CD4-positive, alpha-beta memory T cell (primary cell): ENCODE measurements at regions of chr6 and their contacts with region 1.

Region 1: DNA sequence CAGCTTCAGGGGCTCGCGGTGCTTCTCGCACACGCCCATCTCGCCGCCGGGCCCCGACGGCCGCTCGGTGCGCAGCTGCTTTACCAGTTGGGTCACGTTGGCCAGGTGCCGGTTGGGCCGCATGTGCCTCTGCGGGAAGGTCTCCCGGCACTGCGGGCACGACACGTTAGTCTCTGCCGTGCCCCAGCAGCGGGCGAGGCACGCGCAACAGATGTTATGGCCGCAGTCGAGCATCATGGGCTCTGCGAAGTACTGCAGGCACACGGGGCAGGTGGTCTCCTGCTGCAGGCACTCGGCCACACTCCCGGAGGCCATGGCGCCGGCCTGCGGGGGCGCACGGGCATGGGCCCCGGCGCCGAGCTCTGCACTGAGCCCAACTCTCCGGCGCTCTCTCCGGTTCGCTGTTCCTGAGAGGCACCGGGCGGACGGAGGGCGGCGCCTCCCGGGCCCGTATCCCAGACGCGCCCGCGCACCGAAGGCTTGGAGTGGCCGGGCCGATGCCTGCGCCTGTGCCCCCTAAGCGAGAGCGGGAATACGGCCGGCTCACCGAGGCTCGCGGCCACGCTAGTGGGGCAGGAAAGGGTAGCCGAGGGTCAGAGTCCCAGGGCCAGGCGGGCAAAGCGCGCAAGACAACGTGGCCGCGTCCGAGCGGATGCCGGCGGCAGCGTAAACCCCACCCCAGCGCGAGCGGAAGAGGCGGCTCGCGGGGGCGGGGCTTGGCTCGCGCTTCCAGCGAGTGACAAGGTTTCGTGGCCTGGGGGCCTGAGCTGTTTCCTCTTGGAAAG is at the start of gene TRIM27:
- DNase-seq: peak; percentile 76 to 84 (median 78)
- H3K4me3 ChIP-seq: peak within 1 kb of the TSS; percentile 82 to 91
- H3K4me3 Mint-ChIP-seq: peak within 1 kb of the TSS; percentile 92 to 98 (median 95)
- H3K27ac ChIP-seq: peak within 1 kb of the TSS; percentile 82
- H3K27ac Mint-ChIP-seq: peak within 1 kb of the TSS; percentile 86 to 96 (median 94)
- H3K4me1 ChIP-seq: peaks cover 46% of the 10 kb centered on the region
- H3K4me1 Mint-ChIP-seq: peaks cover 30 to 49% (median 41%) of the 10 kb centered on the region in 4 donors
- H3K27me3 ChIP-seq: no peaks in the 10 kb centered on the region
- H3K27me3 Mint-ChIP-seq: peaks cover 0 to 2% of the 10 kb centered on the region in 2 donors
- total RNA-seq, gene TRIM27: 102 to 108 TPM

Region 2: DNA sequence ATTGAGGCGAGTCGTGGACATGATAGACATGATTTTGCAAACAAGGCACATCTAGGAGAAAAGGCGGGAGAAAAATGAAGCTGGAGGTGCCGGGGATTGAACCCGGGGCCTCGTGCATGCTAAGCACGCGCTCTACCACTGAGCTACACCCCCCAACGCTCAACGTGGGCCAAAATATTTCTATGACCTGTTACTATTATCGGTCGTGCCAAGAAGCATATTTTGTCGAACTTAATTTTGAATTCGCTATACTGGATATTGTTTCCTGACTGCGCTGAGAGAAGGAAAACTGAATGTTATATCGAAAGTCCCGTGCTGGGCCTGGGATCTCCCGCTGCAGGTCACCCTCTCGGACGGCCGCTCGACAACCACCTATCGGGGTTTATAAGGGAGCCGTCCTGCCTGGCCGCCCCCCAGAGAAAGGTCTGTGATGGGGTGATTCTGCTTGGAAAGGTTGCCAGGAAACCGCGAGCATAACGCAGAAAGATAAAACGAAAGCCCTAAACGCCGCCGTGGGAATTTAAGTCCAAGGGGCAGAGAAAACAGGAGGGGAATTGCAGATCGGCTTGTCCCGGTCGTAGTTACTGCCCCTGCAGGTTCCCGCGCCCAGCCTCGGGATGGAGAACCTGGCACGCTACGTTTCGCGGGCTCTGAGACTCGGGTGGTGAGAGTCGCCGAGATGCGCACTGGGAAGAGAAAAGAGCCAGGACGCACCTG is 59.7 kb before region 1 on chr6:
- CTCF ChIA-PET with region 1: interaction called, 7 read pairs
- POLR2A ChIA-PET with region 1: interaction called, 92 read pairs
- intact Hi-C with region 1: loop called (anchors 1 kb)
- DNase-seq: peak; percentile 88 to 91 (median 89)
- H3K4me3 ChIP-seq: peak overlapping the region; percentile 53 to 85
- H3K4me3 Mint-ChIP-seq: peak overlapping the region; percentile 92 to 97 (median 94)
- H3K27ac ChIP-seq: peak overlapping the region; percentile 45
- H3K27ac Mint-ChIP-seq: peak overlapping the region; percentile 79 to 99 (median 97)
- H3K4me1 ChIP-seq: peaks cover 14% of the 10 kb centered on the region
- H3K4me1 Mint-ChIP-seq: peaks cover 21 to 64% (median 43%) of the 10 kb centered on the region in 4 donors
- H3K27me3 ChIP-seq: no peaks in the 10 kb centered on the region
- H3K27me3 Mint-ChIP-seq: peaks cover 4 to 5% of the 10 kb centered on the region in 2 donors

Region 3: DNA sequence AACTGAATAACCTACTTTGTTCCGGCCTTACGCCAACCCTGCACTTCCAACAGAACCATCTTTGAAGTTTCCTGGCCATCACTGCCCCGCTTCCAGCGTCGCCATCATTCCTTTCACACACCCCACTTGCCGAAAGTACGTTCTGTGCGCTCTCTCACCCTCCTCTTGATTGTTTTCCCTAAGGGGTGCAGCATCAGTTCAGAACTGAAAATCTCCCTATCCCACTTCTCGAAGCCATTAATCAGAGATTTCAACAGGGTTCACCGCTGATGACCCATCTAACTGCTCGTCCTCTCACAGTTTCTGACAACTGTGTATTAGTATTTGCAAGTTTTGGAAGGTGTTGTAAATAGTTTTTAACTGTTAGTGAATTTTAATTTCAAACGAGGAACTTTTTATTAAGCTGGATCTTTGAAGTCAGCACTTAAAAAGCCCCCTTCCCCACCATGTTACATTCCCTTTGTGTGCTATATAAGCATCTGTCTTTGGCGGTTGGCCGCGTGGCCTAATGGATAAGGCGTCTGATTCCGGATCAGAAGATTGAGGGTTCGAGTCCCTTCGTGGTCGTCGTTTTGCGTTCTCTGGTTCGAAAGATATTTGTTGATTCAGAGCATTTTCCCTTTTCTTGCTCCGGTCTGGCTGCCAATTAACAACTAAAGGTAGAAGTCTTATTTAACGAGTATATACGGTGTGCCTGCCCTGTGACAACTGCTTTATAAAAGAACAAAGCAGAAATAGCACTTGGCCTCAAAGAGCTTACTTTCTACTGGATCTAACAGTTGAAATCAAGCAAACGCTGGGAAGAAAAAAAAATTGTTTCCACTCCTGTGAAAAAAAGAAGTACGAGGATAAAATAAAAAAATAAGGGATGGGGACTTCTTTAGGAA is 42.4 kb before region 1 on chr6:
- CTCF ChIA-PET with region 1: no interaction called
- POLR2A ChIA-PET with region 1: interaction called, 70 read pairs
- intact Hi-C with region 1: loop called (anchors 1 kb)
- DNase-seq: peak in 4 of 5 donors; percentile 21 to 46 (median 37)
- H3K4me3 ChIP-seq: no peak overlapping the region
- H3K4me3 Mint-ChIP-seq: peak overlapping the region; percentile 62 to 83 (median 76)
- H3K27ac ChIP-seq: no peak overlapping the region
- H3K27ac Mint-ChIP-seq: peak overlapping the region in 6 of 7 donors; percentile 18 to 94 (median 78)
- H3K4me1 ChIP-seq: peaks cover 24% of the 10 kb centered on the region
- H3K4me1 Mint-ChIP-seq: peaks cover 30 to 39% (median 35%) of the 10 kb centered on the region in 4 donors
- H3K27me3 ChIP-seq: no peaks in the 10 kb centered on the region
- H3K27me3 Mint-ChIP-seq: peaks cover 12 to 23% of the 10 kb centered on the region in 2 donors

Region 4: GRCh38 chr6:28910902-28911690 is 12.4 kb before region 1 on chr6:
- CTCF ChIA-PET with region 1: interaction called, 4 read pairs
- POLR2A ChIA-PET with region 1: interaction called, 29 read pairs
- intact Hi-C with region 1: loop called (anchors 1 kb)
- DNase-seq: no peak
- H3K4me3 ChIP-seq: no peak overlapping the region
- H3K4me3 Mint-ChIP-seq: no peak overlapping the region
- H3K27ac ChIP-seq: no peak overlapping the region
- H3K27ac Mint-ChIP-seq: peak overlapping the region in 3 of 7 donors; percentile 36 to 76 (median 54)
- H3K4me1 ChIP-seq: no peaks in the 10 kb centered on the region
- H3K4me1 Mint-ChIP-seq: peaks cover 0 to 4% (median under 1%) of the 10 kb centered on the region in 4 donors
- H3K27me3 ChIP-seq: no peaks in the 10 kb centered on the region
- H3K27me3 Mint-ChIP-seq: no peaks in the 10 kb centered on the region

Region 5: GRCh38 chr6:28981833-28982475 is 58.4 kb after region 1 on chr6:
- CTCF ChIA-PET with region 1: interaction called, 4 read pairs
- POLR2A ChIA-PET with region 1: interaction called, 27 read pairs
- intact Hi-C with region 1: loop called (anchors 1 kb)
- DNase-seq: peak; percentile 79 to 87 (median 84)
- H3K4me3 ChIP-seq: peak overlapping the region; percentile 99
- H3K4me3 Mint-ChIP-seq: peak overlapping the region; percentile 87 to 95 (median 94)
- H3K27ac ChIP-seq: no peak overlapping the region
- H3K27ac Mint-ChIP-seq: peak overlapping the region; percentile 84 to 100 (median 95)
- H3K4me1 ChIP-seq: peaks cover 28% of the 10 kb centered on the region
- H3K4me1 Mint-ChIP-seq: peaks cover 37 to 65% (median 46%) of the 10 kb centered on the region in 4 donors
- H3K27me3 ChIP-seq: no peaks in the 10 kb centered on the region
- H3K27me3 Mint-ChIP-seq: peaks cover 14 to 24% of the 10 kb centered on the region in 2 donors

Region 6: GRCh38 chr6:30781743-30782424 is 1858.4 kb after region 1 on chr6:
- CTCF ChIA-PET with region 1: no interaction called
- POLR2A ChIA-PET with region 1: no interaction called
- intact Hi-C with region 1: no loop called
- DNase-seq: no peak
- H3K4me3 ChIP-seq: no peak overlapping the region
- H3K4me3 Mint-ChIP-seq: no peak overlapping the region
- H3K27ac ChIP-seq: no peak overlapping the region
- H3K27ac Mint-ChIP-seq: peak overlapping the region in 1 of 7 donors; percentile 89
- H3K4me1 ChIP-seq: peaks cover 11% of the 10 kb centered on the region
- H3K4me1 Mint-ChIP-seq: peaks cover 12 to 23% (median 20%) of the 10 kb centered on the region in 4 donors
- H3K27me3 ChIP-seq: no peaks in the 10 kb centered on the region
- H3K27me3 Mint-ChIP-seq: no peaks in the 10 kb centered on the region